Caco-2 (cell line): ENCODE measurements at regions of chr6 and their contacts with region 1.

Region 1: DNA sequence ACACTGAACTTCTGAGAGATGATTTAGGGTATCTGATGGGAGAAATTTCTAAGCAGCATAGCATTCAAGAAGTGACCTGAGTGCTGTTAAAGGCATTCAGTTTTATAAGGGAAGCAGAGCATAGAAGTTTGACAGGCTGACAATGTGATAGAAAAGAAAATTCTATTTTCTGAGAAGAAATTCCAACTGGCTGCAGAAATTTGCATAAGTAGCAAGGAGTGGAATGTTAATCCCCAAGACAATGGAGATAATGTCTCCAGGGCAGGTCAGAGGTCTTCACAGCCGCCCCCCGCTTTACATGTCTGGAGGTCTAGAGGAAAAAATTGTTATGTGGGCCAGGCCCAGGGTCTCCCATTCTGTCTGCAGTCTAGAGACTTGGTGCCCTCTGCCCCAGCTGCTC is 1361.8 kb upstream of the EYS start:
- DNase-seq: no peak
- H3K4me3 ChIP-seq: no peak overlapping the region
- H3K4me3 Mint-ChIP-seq: no peak overlapping the region
- H3K27ac Mint-ChIP-seq: no peak overlapping the region
- H3K4me1 ChIP-seq: no peaks in the 10 kb centered on the region
- H3K4me1 Mint-ChIP-seq: no peaks in the 10 kb centered on the region
- H3K27me3 ChIP-seq: no peaks in the 10 kb centered on the region
- H3K27me3 Mint-ChIP-seq: no peaks in the 10 kb centered on the region
- CTCF ChIP-seq: no peak

Region 2: GRCh38 chr6:66883453-66883852 is 185.3 kb before region 1 on chr6:
- CTCF ChIA-PET with region 1: no interaction called
- POLR2A ChIA-PET with region 1: no interaction called
- intact Hi-C with region 1: no loop called
- DNase-seq: no peak
- H3K4me3 ChIP-seq: no peak overlapping the region
- H3K4me3 Mint-ChIP-seq: no peak overlapping the region
- H3K27ac Mint-ChIP-seq: no peak overlapping the region
- H3K4me1 ChIP-seq: no peaks in the 10 kb centered on the region
- H3K4me1 Mint-ChIP-seq: no peaks in the 10 kb centered on the region
- H3K27me3 ChIP-seq: no peaks in the 10 kb centered on the region
- H3K27me3 Mint-ChIP-seq: no peaks in the 10 kb centered on the region
- CTCF ChIP-seq: no peak

Region 3: GRCh38 chr6:67112120-67112519 is 43.3 kb after region 1 on chr6:
- CTCF ChIA-PET with region 1: no interaction called
- POLR2A ChIA-PET with region 1: no interaction called
- intact Hi-C with region 1: loop called (anchors 1 kb)
- DNase-seq: no peak
- H3K4me3 ChIP-seq: no peak overlapping the region
- H3K4me3 Mint-ChIP-seq: no peak overlapping the region
- H3K27ac Mint-ChIP-seq: no peak overlapping the region
- H3K4me1 ChIP-seq: no peaks in the 10 kb centered on the region
- H3K4me1 Mint-ChIP-seq: no peaks in the 10 kb centered on the region
- H3K27me3 ChIP-seq: no peaks in the 10 kb centered on the region
- H3K27me3 Mint-ChIP-seq: no peaks in the 10 kb centered on the region
- CTCF ChIP-seq: no peak

Region 4: DNA sequence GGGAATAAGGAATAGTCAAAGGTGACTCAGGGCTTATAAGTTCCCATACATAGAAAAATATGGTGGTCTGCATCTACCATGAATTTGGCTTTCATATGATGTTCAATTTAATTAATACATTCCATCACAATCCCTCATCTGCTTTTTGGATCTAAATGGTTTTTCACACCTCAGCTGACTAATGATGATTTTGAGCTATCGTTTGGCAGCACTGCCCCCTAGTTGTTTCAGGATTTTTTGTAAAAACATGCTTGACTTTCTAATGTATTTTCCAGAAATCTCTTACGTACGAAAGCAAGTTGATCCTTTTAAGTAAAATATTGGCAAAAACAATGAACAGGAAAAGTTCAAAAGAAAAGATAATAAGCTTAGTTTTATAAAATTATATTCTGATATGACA is 1157.7 kb after region 1 on chr6:
- CTCF ChIA-PET with region 1: no interaction called
- POLR2A ChIA-PET with region 1: no interaction called
- intact Hi-C with region 1: loop called (anchors 1 kb)
- DNase-seq: peak in 1 of 2 experiments; percentile 8
- H3K4me3 ChIP-seq: no peak overlapping the region
- H3K4me3 Mint-ChIP-seq: no peak overlapping the region
- H3K27ac Mint-ChIP-seq: no peak overlapping the region
- H3K4me1 ChIP-seq: peaks cover 18% of the 10 kb centered on the region; the same call in 1 of the 2 replicates
- H3K4me1 Mint-ChIP-seq: peaks cover 8% of the 10 kb centered on the region
- H3K27me3 ChIP-seq: no peaks in the 10 kb centered on the region
- H3K27me3 Mint-ChIP-seq: peaks cover 13% of the 10 kb centered on the region
- CTCF ChIP-seq: peak; percentile 31 to 32

Region 5: DNA sequence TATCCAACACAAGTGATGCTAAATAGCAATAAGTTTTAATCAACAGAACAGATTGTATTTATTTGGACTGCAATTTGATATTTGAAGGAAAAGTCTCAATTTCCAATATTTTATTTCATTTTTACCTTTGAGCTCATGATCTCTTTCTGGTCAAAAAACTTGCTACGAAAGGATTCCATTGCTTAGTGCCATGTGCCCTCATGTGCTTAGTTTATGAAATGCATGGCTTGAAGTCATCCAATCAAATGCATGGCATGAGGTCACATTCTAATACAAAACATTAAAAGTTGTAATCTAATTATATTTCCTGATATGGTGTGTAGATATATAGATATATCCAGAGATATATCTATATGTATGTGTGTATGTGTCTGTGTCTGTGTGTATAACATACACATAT is 1245.1 kb after region 1 on chr6:
- CTCF ChIA-PET with region 1: no interaction called
- POLR2A ChIA-PET with region 1: no interaction called
- intact Hi-C with region 1: loop called (anchors 10 kb)
- DNase-seq: peak in 1 of 2 experiments; percentile 5
- H3K4me3 ChIP-seq: no peak overlapping the region
- H3K4me3 Mint-ChIP-seq: no peak overlapping the region
- H3K27ac Mint-ChIP-seq: no peak overlapping the region
- H3K4me1 ChIP-seq: no peaks in the 10 kb centered on the region
- H3K4me1 Mint-ChIP-seq: no peaks in the 10 kb centered on the region
- H3K27me3 ChIP-seq: no peaks in the 10 kb centered on the region
- H3K27me3 Mint-ChIP-seq: no peaks in the 10 kb centered on the region
- CTCF ChIP-seq: peak in 1 of 2 experiments; percentile 14